ENCODE measurements at regions of chr6 and their contacts with region 1.

Region 1: DNA sequence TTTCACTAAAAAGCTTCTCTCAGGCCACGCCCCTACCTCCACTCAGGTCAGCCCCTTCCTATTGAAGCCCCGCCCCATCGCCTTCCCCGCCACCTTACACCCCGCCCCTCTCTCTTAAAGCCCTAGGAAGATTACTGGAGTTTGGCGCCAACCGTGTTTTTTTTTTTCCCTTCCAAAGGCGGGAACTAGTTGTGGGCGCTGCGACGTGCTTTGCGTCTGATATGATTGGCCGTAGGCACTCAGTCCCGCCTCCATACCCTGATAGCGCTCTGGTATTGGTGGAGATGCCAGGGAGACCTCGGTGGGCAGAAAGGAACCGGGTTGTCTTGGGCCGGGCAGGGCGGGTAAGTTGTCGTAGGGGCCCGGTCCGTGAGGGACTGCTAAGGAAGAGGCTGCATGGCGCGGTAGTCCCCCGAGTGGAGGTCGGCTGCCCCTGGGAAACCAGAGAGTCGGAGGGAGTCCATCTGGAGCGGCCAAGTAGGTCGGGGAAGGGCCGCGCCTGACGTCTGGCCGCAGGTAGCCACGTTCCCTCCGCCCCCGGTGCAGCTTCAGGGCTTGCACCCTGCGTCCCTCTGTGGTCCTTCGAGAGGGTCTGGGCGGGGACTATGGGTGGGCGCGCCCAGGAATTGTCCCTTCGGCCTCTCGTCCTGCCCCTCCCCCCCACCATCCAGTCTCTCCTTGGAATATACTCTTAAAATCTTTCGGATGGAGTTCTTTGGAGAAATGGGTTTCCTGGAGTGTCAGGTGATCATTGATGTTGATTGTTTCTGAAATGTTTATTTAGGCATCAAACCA is at the start of gene CASP8AP2:
- DNase-seq: peak; percentile 81 to 99
- ATAC-seq: peak; percentile 92 to 98 (median 92)
- H3K4me3 ChIP-seq: peak within 1 kb of the TSS; percentile 96
- H3K4me3 Mint-ChIP-seq: peak within 1 kb of the TSS; percentile 98
- H3K27ac ChIP-seq: peak within 1 kb of the TSS; percentile 71
- H3K27ac Mint-ChIP-seq: peak within 1 kb of the TSS; percentile 89 to 95
- H3K4me1 ChIP-seq: peaks cover 23% of the 10 kb centered on the region
- H3K4me1 Mint-ChIP-seq: peaks cover 19 to 30% of the 10 kb centered on the region in 2 donors
- H3K27me3 ChIP-seq: no peaks in the 10 kb centered on the region
- H3K27me3 Mint-ChIP-seq: no peaks in the 10 kb centered on the region
- CTCF ChIP-seq: no peak
- total RNA-seq, gene CASP8AP2: 24.3 to 31.8 (median 25.4) TPM

Region 2: GRCh38 chr6:89536231-89536630 is 293.6 kb before region 1 on chr6:
- intact Hi-C with region 1: no loop called
- DNase-seq: no peak
- ATAC-seq: no peak
- H3K4me3 ChIP-seq: no peak overlapping the region
- H3K4me3 Mint-ChIP-seq: no peak overlapping the region
- H3K27ac ChIP-seq: no peak overlapping the region
- H3K27ac Mint-ChIP-seq: no peak overlapping the region
- H3K4me1 ChIP-seq: no peaks in the 10 kb centered on the region
- H3K4me1 Mint-ChIP-seq: no peaks in the 10 kb centered on the region
- H3K27me3 ChIP-seq: no peaks in the 10 kb centered on the region
- H3K27me3 Mint-ChIP-seq: peaks cover 0 to 16% of the 10 kb centered on the region in 2 donors
- CTCF ChIP-seq: no peak

Region 3: DNA sequence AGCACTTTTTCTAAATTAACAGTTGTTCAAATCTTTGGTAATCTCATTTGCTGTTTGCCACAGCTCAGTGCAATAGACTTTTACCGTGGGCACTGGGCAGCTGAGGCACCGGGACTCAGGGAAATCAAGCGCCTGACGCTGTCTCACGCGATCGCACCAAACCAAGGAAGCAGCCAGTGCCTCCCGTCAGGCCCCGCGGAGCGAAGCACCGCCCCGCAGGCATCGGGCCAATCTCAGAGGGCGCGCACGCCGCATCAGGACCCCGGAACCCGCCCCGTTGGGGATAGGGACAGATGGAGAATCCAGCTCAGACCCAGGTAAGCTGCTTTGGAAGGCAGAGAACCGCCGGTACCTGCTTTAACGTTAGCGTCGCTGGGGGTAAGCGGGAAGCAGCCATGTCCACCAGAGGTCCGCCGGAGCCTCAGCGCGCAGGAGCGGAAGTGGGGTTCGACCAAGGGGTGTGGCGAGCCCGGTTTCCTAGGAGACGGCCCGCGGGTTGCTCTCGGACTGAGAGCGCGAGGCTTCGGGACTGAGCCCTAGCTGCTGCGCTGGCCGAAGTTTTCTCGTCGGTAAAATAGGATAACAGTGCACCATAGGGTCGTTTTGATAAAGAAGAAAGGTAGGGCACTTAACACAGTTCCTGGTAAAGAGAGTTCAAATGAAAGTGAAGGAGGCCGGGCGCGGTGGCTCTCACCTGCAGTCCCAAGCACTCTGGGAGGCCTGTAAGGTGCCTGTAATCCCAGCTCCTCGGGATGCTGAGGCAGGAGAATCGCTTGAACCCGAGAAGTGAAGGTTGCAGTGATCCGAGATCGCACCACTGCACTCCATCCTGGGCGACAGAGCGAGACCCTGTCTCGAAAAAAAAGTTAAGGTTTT is 191.2 kb before region 1 on chr6 and contains the start of gene LYRM2:
- intact Hi-C with region 1: loop called (anchors 1 kb)
- DNase-seq: peak; percentile 90 to 95
- ATAC-seq: peak; percentile 93 to 98 (median 93)
- H3K4me3 ChIP-seq: peak within 1 kb of the TSS; percentile 91
- H3K4me3 Mint-ChIP-seq: peak within 1 kb of the TSS; percentile 98
- H3K27ac ChIP-seq: peak within 1 kb of the TSS; percentile 92
- H3K27ac Mint-ChIP-seq: peak within 1 kb of the TSS; percentile 99 to 100
- H3K4me1 ChIP-seq: peaks cover 10% of the 10 kb centered on the region
- H3K4me1 Mint-ChIP-seq: peaks cover 21 to 26% of the 10 kb centered on the region in 2 donors
- H3K27me3 ChIP-seq: no peaks in the 10 kb centered on the region
- H3K27me3 Mint-ChIP-seq: no peaks in the 10 kb centered on the region
- CTCF ChIP-seq: no peak
- total RNA-seq, gene LYRM2: 21.1 to 25.5 (median 25.0) TPM

Region 4: GRCh38 chr6:89819336-89820130 is 10.3 kb before region 1 on chr6 and contains the start of gene MDN1:
- intact Hi-C with region 1: loop called (anchors 1 kb)
- DNase-seq: peak; percentile 71 to 97
- ATAC-seq: peak; percentile 92 to 95 (median 95)
- H3K4me3 ChIP-seq: peak within 1 kb of the TSS; percentile 83
- H3K4me3 Mint-ChIP-seq: peak within 1 kb of the TSS; percentile 96
- H3K27ac ChIP-seq: peak within 1 kb of the TSS; percentile 70
- H3K27ac Mint-ChIP-seq: peak within 1 kb of the TSS; percentile 92 to 97
- H3K4me1 ChIP-seq: peaks cover 18% of the 10 kb centered on the region
- H3K4me1 Mint-ChIP-seq: peaks cover 33 to 34% of the 10 kb centered on the region in 2 donors
- H3K27me3 ChIP-seq: no peaks in the 10 kb centered on the region
- H3K27me3 Mint-ChIP-seq: no peaks in the 10 kb centered on the region
- CTCF ChIP-seq: no peak
- total RNA-seq, gene MDN1: 38.0 to 43.3 (median 41.4) TPM

Measured in natural killer cell (primary cell).